ENCODE measurements at regions of chr20 and their contacts with region 1.

Region 1: GRCh38 chr20:38446441-38447209 is 11.5 kb upstream of the SNHG17 start:
- DNase-seq: peak; percentile 66 to 81
- ATAC-seq: peak; percentile 89 to 90
- H3K4me3 ChIP-seq: peak overlapping the region; percentile 78 to 99 (median 86)
- H3K27ac ChIP-seq: peak overlapping the region; percentile 73 to 87 (median 80)
- H3K4me1 ChIP-seq: peaks cover 7 to 12% of the 10 kb centered on the region in 2 donors
- H3K27me3 ChIP-seq: no peaks in the 10 kb centered on the region
- CTCF ChIP-seq: peak; percentile 80 to 93 (median 86)
- POLR2A ChIP-seq: peak; percentile 52 to 72

Region 2: GRCh38 chr20:38033310-38034107 is 413.1 kb before region 1 on chr20 and contains the starts of genes RPRD1B and TTI1:
- in situ Hi-C with region 1: loop called in 1 of 4 experiments (anchors 25 kb)
- intact Hi-C with region 1: no loop called
- DNase-seq: peak; percentile 81 to 87
- ATAC-seq: peak; percentile 94
- H3K4me3 ChIP-seq: peak within 1 kb of the TSS; percentile 77 to 98 (median 92)
- H3K27ac ChIP-seq: peak within 1 kb of the TSS; percentile 95 to 97 (median 96)
- H3K4me1 ChIP-seq: peaks cover 58 to 62% of the 10 kb centered on the region in 2 donors
- H3K27me3 ChIP-seq: no peaks in the 10 kb centered on the region
- CTCF ChIP-seq: no peak
- POLR2A ChIP-seq: peak; percentile 73 to 85
- total RNA-seq, gene RPRD1B: 25.2 to 61.0 (median 40.6) TPM
- total RNA-seq, gene TTI1: 14.8 to 25.4 (median 20.3) TPM

Region 3: DNA sequence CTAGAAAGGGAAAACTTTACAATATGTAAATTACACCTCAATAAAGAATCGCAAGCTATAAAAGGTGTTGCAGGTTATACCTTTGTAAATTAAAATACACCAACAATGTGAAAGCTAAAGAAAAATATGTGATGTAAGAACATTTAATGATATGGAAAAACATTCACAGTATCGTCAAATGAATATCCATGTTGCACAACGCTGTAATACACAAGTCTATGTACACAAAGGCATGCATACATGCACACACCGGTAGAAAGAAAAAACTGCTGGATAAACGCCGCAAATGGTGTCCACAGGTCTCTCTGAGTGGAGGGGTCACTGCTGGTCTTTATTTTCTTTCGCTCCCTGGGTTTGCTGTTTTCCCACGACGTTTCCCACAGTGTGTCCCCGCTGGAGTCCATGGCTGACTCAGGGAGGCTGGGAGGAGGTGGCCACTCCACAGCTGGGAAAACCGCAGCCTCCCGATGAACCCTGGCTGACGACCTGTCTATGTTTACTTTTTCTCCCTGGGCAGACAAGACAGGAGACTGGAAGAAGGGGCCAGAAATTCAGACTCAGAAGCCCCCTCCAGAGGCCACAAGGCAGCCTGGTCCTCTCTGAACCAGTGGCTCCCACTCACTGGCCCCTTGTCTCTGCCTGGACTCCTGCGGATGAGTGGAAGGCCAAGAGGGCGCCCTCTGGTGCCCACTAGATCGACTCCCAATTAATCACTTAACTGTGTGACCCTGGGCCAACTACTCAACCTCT is 155.6 kb before region 1 on chr20:
- in situ Hi-C with region 1: no loop called
- intact Hi-C with region 1: no loop called
- DNase-seq: no peak
- ATAC-seq: no peak
- H3K4me3 ChIP-seq: no peak overlapping the region
- H3K27ac ChIP-seq: no peak overlapping the region
- H3K4me1 ChIP-seq: no peaks in the 10 kb centered on the region
- H3K27me3 ChIP-seq: no peaks in the 10 kb centered on the region
- CTCF ChIP-seq: no peak
- POLR2A ChIP-seq: no peak

Region 4: GRCh38 chr20:38434743-38435554 is 11.7 kb before region 1 on chr20 and contains the start of gene SNHG17:
- in situ Hi-C with region 1: no loop called
- intact Hi-C with region 1: loop called (anchors 1 kb)
- DNase-seq: peak; percentile 76 to 85
- ATAC-seq: peak; percentile 87 to 88
- H3K4me3 ChIP-seq: peak within 1 kb of the TSS; percentile 75 to 97 (median 94)
- H3K27ac ChIP-seq: peak within 1 kb of the TSS; percentile 77 to 94 (median 90)
- H3K4me1 ChIP-seq: peaks cover 0 to 23% of the 10 kb centered on the region in 2 donors
- H3K27me3 ChIP-seq: no peaks in the 10 kb centered on the region
- CTCF ChIP-seq: peak; percentile 95 to 100 (median 99)
- POLR2A ChIP-seq: peak; percentile 57 to 75
- total RNA-seq, gene SNHG17: 6.0 to 12.2 (median 8.7) TPM

Measured in gastrocnemius medialis (tissue), 4 donors.